Posterior vena cava (tissue), 2 donors: ENCODE measurements at regions of chr2 and their contacts with region 1.

Region 1: GRCh38 chr2:196592912-196593881 is 46.3 kb upstream of the CCDC150 start:
- DNase-seq: no peak

Region 2: DNA sequence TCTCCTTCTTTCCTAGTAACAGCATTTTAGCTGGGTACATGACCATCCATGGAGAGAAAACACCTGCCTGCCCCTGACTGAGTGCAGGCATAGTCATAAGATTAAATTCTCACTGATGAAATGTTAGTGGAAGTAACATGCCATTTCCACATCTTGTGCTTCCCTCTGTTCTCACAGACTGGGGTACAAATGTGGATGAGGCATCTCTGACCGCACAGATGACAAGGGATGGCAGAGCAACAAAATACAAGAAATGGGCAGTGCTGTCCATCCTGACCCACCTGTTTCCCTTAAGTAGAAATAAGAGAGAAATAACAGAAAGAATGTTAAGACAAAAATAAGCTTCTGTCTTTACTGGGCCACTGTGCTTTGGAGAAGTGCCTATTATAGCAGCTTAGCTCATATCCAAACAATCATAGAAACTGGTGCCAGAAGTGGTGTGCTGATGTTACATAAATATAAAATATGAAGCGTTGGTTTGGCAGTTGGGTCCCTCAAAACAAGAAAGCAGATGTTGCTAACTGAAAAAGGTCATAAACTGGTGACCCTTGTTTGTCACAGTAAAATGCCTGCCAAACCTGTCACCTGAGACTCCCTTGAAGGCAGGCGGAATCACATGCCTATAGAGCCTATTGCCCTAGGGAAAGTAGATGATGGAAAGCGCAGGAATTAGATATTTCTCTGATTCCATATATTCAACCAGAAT is 26.1 kb before region 1 on chr2:
- intact Hi-C with region 1: no loop called
- DNase-seq: no peak

Region 3: DNA sequence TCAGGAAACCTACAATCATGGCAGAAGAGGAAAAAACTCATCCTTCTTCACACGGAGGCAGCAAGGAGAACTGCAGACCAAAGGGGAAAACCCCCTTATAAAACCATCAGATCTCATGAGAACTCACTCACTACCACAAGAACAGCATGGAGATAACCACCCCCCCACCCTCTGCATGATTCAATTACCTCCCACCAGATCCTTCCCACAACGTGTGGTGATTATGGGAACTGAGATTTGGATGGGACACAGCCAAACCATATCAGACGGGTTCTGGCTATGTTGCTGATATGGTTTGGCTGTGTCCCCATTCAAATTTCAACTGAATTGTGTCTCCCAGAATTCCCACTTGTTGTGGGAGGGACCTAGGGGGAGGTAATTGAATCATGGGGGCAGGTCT is 17.6 kb after region 1 on chr2:
- intact Hi-C with region 1: loop called in 1 of 2 experiments (anchors 1 kb)
- DNase-seq: no peak

Region 4: DNA sequence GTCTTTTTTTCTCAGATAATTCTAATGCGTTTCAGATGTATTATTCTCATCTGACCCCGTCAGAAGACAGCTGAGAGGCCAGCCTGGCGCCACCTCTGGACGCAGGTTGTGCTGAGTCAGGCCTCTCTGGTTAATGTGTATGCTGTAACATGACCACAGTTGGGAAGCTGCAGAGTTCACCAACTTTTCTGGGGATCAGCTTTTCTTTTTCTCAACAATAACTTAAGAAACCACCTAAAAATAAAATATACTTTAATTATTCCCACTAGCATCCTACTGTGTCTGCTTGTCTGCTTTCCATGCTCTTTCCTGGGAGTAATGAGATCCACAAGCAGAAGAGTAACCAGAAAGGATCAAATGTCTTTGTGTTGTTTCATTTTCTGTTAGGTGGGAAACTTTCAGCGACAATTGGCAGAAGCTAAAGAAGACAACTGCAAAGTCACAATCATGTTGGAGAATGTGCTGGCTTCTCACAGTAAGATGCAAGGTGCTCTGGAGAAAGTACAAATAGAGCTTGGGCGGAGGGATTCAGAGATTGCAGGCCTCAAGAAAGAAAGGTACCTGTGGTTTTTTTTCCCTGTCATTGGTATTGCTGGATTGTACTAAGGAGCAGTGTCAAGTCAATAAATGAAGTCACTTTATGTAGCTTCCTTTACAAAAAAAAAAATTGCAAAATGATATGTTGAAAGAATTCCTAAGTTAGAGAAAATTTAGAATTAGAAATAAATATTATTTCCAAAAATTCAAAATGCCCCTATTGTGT is 126.1 kb after region 1 on chr2:
- intact Hi-C with region 1: no loop called
- DNase-seq: no peak

Region 5: DNA sequence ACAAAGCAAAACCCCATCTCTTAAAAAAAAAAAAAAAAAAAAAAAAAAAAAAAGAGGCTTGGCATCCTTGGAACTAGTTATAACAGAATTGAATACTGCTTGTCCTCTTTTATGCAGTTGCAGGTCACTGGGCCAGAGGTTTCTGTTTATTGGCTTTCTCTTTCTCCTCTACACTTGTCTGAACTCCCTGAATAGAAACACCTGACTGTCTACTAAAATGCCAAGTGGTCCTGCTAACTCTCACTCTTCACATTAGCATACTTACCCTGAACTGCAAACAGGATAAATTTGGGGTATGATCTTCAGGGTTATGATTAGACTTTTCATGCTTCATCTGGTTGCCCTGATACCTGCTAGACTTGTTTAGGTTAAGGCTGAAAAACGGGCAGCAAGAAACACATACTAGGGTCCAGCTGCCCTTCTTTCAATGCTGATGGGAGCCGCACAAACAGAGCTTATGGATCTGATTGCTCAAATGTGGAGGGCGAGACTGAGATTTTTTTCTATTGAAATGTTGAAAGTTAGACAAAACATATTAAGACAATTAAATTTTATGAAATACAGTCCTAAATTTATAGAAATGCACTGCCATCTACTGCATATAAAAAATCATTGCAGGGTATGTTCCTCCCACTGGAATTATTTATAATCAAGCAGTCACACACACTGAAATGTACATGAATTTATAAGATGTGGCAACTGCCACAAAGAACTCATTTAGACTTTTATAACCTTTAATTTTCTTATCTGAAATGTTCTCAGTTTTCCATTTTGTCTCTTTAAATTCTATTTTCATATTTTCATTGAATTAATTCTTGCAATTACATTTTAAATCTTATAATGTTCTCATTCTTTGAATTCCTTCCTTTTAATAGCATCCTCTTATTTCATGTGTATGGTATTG is 165.5 kb after region 1 on chr2:
- intact Hi-C with region 1: no loop called
- DNase-seq: no peak

Region 6: GRCh38 chr2:197255543-197255942 is 662.3 kb after region 1 on chr2:
- intact Hi-C with region 1: no loop called
- DNase-seq: peak; percentile 93